ENCODE measurements at regions of chr2 and their contacts with region 1.

Region 1: GRCh38 chr2:201795607-201796477 is 10.5 kb upstream of the CDK15 start:
- DNase-seq: no peak
- ATAC-seq: peak; percentile 71
- H3K4me3 ChIP-seq: no peak overlapping the region
- H3K27ac ChIP-seq: no peak overlapping the region
- H3K4me1 ChIP-seq: peaks cover 0 to 2% of the 10 kb centered on the region in 2 donors
- H3K27me3 ChIP-seq: no peaks in the 10 kb centered on the region

Region 2: GRCh38 chr2:201847481-201847880 is 51.6 kb after region 1 on chr2:
- intact Hi-C with region 1: loop called in 1 of 2 experiments (anchors 5 kb)
- DNase-seq: no peak
- ATAC-seq: no peak
- H3K4me3 ChIP-seq: no peak overlapping the region
- H3K27ac ChIP-seq: no peak overlapping the region
- H3K4me1 ChIP-seq: peaks cover 0 to 4% of the 10 kb centered on the region in 2 donors
- H3K27me3 ChIP-seq: no peaks in the 10 kb centered on the region

Region 3: GRCh38 chr2:201860636-201861066 is 64.8 kb after region 1 on chr2:
- intact Hi-C with region 1: loop called in 1 of 2 experiments (anchors 2 kb)
- DNase-seq: no peak
- ATAC-seq: peak; percentile 88
- H3K4me3 ChIP-seq: no peak overlapping the region
- H3K27ac ChIP-seq: no peak overlapping the region
- H3K4me1 ChIP-seq: no peaks in the 10 kb centered on the region
- H3K27me3 ChIP-seq: peaks cover 0 to 2% of the 10 kb centered on the region in 2 donors

Region 4: DNA sequence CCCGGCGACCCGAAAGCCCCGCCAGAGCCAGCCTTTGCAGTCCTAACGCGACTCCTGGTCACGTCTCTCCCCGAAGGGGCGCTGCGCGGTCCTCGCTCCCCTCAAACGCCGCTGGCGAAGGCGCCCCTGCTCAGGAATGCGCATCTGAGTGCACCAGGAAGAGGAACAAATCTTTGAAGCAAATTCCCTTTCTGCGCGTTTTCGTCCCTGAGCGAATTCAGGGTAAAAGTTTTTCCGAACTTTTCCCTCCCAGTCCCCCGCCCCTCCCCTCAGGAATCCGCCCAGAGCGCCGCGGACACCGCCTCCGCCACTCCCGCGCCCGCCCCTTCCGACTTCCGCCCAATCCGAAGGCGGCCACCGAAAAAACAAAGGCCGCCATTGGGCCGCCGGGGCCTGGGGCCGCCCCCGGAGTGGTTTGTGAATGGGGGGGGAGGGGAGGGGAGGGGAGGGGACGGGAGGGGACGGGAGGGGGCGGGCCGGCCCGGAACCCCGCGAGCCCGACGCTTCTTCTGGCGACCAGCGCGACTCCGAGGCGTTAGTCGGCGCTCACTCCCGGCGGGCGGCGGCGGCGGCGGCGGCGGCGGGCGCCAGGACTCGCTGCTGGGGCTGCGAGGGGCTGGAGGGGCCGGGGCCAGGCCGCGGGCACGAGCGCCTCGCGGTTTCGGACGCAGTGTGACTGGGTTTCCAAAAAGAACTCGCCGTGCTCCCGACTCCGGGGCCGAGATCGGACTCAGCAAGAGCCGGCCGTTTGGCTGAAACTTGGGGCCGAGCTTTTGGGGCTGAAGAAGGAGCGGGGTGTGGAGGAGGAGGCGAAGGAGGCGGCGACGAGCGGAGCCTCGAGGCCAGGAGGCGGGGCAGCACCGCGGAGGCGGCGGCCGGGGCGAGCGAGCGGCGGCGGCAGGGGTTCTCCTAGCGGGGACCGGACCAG is 237.7 kb after region 1 on chr2 and contains the start of gene FZD7:
- intact Hi-C with region 1: loop called (anchors 5 kb)
- DNase-seq: peak; percentile 96 to 98
- ATAC-seq: peak; percentile 95
- H3K4me3 ChIP-seq: peak within 1 kb of the TSS; percentile 53 to 76
- H3K27ac ChIP-seq: peak within 1 kb of the TSS; percentile 91 to 96
- H3K4me1 ChIP-seq: no peaks in the 10 kb centered on the region
- H3K27me3 ChIP-seq: no peaks in the 10 kb centered on the region
- total RNA-seq, gene FZD7: 19.0 to 24.3 TPM

Region 5: DNA sequence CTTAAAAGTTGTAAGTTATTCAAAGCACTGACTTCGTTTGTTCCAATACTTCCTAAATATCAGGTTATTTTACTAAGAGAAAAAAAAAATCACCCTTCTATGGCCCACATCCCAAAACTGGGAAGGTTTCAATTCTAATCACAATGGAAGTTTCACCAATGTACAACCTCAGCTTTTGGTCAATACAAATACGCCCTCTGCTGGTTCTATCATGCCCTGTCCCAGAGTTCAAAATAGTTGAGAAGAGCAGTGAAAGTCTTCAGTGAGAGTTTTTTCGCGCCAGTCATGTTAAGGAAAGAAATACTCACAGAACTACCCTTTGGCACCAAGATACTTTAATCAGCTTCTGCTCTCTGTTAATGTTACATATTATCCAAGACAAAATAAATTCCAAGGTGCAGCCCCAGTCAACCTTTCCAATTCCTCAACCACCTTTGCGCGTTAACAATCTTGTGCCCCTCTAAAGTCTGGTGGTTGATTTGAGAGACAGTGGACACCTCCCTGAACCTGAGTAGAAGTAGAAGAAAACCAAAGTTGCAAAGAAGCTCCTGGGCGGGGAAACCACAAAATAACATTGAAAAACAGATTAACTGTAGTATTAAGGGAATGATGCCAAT is 382.6 kb after region 1 on chr2:
- intact Hi-C with region 1: loop called (anchors 1 to 5 kb)
- DNase-seq: no peak
- ATAC-seq: peak; percentile 87
- H3K4me3 ChIP-seq: no peak overlapping the region
- H3K27ac ChIP-seq: no peak overlapping the region
- H3K4me1 ChIP-seq: no peaks in the 10 kb centered on the region
- H3K27me3 ChIP-seq: no peaks in the 10 kb centered on the region